ENCODE measurements at regions of chr1 and their contacts with region 1.

Region 1: DNA sequence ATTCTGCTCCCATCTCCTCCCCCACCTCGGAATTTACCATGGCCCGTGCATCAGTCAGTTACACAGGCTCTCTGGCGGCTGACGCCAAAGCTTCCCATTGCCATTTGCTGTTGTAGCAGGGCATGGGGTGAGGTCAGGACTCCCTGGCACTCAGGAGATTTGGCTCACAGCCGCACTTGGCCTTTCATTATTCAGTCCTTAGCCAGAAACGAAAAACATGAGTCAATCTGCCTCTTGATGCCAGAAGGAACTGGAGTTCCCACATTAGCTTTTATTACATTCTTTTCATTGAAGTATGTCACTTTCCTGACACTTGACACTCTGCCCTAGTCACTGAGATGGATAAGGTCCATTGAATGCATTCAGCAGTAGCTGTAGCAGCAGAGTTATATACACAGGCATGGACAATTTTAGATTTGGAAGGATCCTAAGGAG is 260.6 kb downstream of the CACNA1E start:
- DNase-seq: peak in 1 of 5 donors; percentile 51
- ATAC-seq: peak in 1 of 4 donors; percentile 78
- H3K4me3 ChIP-seq: no peak overlapping the region
- H3K27ac ChIP-seq: no peak overlapping the region
- H3K4me1 ChIP-seq: no peaks in the 10 kb centered on the region
- H3K27me3 ChIP-seq: peaks cover 0 to 12% (median 0%) of the 10 kb centered on the region in 9 donors
- CTCF ChIP-seq: no peak
- POLR2A ChIP-seq: no peak

Region 2: GRCh38 chr1:182054698-182055326 is 310.9 kb after region 1 on chr1:
- intact Hi-C with region 1: loop called in 1 of 10 experiments (anchors 10 kb)
- DNase-seq: peak in 1 of 5 donors; percentile 20
- ATAC-seq: no peak
- H3K4me3 ChIP-seq: no peak overlapping the region
- H3K27ac ChIP-seq: no peak overlapping the region
- H3K4me1 ChIP-seq: no peaks in the 10 kb centered on the region
- H3K27me3 ChIP-seq: peaks cover 0 to 52% (median 15%) of the 10 kb centered on the region in 9 donors
- CTCF ChIP-seq: peak; percentile 16 to 55 (median 40)
- POLR2A ChIP-seq: no peak

Measured in heart left ventricle (tissue), 16 donors.